GM10248 (cell line): ENCODE measurements at regions of chr18 and their contacts with region 1.

Region 1: GRCh38 chr18:24488824-24489493 is 28.5 kb downstream of the HRH4 start:
- DNase-seq: peak; percentile 55
- CTCF ChIP-seq: peak; percentile 68

Region 2: GRCh38 chr18:24362758-24363157 is 126.2 kb before region 1 on chr18:
- CTCF ChIA-PET with region 1: interaction called, 63 read pairs
- POLR2A ChIA-PET with region 1: no interaction called
- DNase-seq: no peak
- CTCF ChIP-seq: no peak

Region 3: GRCh38 chr18:24469976-24470624 is 18.9 kb before region 1 on chr18:
- CTCF ChIA-PET with region 1: interaction called, 10 read pairs
- POLR2A ChIA-PET with region 1: no interaction called
- DNase-seq: no peak
- CTCF ChIP-seq: no peak

Region 4: DNA sequence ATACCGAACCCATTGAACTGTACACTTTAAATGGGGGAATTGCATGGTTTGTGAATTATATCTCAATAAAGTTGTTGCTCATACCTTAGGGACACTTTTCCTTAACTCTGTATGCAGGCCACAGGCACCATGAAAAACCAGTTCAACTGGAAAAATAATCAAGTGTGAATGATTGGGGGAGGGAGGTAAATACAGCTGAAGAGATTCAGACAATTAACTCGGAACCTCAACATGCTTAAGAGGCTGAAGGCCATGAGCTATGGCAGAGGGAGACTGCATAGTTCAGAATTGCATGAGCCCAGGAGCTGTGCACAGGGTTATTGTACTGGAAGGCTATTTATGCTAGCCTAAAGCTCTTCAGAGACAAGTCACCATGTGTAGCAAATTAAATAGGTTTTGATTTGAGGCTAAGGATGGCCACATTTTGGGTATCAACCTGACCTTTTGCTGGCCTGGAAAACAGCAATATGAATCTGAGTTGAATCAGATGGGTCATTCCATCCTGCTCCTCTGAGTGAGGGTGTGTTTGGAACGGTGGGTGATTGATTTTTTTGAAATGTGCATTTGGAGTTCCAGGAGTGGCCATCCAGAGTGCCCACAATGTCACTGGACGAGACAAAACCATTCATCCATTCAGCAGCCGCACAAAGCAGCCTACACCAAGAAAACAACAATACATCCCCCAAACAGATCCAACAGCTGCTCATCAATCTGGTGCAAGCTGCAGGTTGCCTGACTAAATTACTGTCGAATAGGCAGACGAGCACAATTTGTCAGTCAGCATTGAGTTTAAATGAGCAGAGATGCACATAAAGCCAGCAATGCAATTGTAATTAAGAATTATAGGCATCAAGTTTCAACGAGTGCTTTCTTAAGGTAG is 13.9 kb after region 1 on chr18:
- CTCF ChIA-PET with region 1: interaction called, 27 read pairs
- POLR2A ChIA-PET with region 1: no interaction called
- DNase-seq: no peak
- CTCF ChIP-seq: no peak

Region 5: DNA sequence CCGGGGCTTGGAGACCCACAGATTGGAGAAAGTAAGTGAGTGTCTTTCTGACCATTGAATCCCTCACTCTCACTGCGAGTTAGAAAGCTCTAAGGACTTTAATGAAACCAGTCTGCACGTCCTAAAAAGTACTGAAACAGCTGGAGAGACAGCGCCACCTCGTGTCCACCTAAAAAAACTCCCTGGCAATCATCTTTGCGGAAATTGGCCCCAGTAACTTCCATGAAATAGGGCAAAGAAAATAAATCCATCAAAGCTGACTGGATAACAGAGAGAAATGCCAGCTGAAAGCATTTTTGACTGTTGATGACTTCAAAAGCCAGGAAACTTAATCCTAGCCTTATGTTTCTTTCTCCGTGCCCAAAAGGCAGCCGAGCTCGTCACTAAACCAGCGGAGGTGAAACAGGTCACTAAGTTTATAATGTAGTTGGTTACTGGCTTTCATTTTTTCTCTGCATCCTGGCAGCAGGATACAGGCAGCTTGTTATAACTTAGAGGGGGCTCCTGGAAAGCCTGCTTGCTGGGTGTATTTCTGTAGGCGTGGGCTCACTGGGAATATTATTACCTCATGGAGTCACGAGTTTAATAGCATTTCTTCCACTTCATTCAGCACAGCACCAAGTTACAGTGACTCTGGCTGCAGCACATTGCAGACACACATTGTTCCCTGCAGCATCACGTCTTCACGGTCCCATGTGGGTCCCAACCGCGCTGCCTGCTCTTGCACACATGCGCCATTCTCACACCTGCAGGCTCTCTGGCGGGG is 238.0 kb after region 1 on chr18:
- CTCF ChIA-PET with region 1: interaction called, 15 read pairs
- POLR2A ChIA-PET with region 1: no interaction called
- DNase-seq: peak; percentile 38
- CTCF ChIP-seq: peak; percentile 77